ENCODE measurements at regions of chr10 and their contacts with region 1.

Region 1: DNA sequence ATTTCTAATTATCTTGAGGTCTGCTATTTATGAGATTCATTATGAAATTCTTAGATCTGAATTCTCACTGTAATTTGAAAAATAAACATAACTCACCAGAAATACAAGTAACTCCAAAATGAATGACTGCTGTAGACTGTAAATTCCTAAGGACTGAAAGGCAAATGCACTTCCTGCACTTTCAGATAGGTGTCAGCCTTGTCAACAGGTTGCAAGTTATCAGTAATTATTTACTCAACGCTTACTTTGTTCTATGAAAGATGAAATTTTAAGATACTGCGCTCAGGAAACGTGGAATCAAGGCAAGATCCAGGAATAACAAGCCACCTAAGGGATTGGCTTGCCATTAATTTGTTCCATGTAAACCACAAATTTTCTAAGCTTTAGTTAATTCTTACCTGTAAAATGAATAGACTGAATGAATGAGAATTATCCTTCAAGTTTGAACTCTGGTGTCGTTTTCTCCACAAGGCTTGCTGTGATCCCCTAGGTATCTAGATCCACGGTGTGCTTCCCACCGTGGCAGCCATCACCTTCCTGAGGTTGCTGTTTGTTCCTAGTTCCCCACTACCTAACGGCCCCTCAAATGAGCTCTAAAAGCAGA is 12.6 kb downstream of the DHX32 start:
- DNase-seq: peak in 3 of 4 experiments; percentile 12 to 51 (median 17)
- ATAC-seq: peak; percentile 75
- H3K4me3 ChIP-seq: no peak overlapping the region
- H3K27ac ChIP-seq: no peak overlapping the region
- H3K4me1 ChIP-seq: no peaks in the 10 kb centered on the region; a peak in 1 of 5 replicates
- H3K27me3 ChIP-seq: no peaks in the 10 kb centered on the region
- CTCF ChIP-seq: peak; percentile 56 to 75 (median 70); a peak in 5 of 6 replicates
- EP300 ChIP-seq: no peak
- POLR2A ChIP-seq: no peak
- RAD21 ChIP-seq: peak; percentile 63 to 70

Region 2: GRCh38 chr10:125976960-125977603 is 108.6 kb after region 1 on chr10:
- CTCF ChIA-PET with region 1: no interaction called
- POLR2A ChIA-PET with region 1: no interaction called
- in situ Hi-C with region 1: loop called (anchors 10 kb)
- intact Hi-C with region 1: loop called (anchors 5 kb)
- DNase-seq: peak in 2 of 4 experiments; percentile 7 to 30
- ATAC-seq: peak; percentile 81
- H3K4me3 ChIP-seq: no peak overlapping the region
- H3K27ac ChIP-seq: no peak overlapping the region
- H3K4me1 ChIP-seq: no peaks in the 10 kb centered on the region; a peak in 2 of 5 replicates
- H3K27me3 ChIP-seq: peaks cover 0 to 11% of the 10 kb centered on the region in 2 experiments; a peak in 2 of 5 replicates
- CTCF ChIP-seq: peak; percentile 35 to 45 (median 39); a peak in 4 of 6 replicates
- EP300 ChIP-seq: no peak
- POLR2A ChIP-seq: no peak
- RAD21 ChIP-seq: peak in 1 of 2 experiments; percentile 27; a peak in 1 of 4 replicates

Region 3: GRCh38 chr10:126133906-126134656 is 265.6 kb after region 1 on chr10:
- CTCF ChIA-PET with region 1: no interaction called
- POLR2A ChIA-PET with region 1: no interaction called
- in situ Hi-C with region 1: no loop called
- intact Hi-C with region 1: no loop called
- DNase-seq: no peak
- ATAC-seq: no peak
- H3K4me3 ChIP-seq: no peak overlapping the region
- H3K27ac ChIP-seq: no peak overlapping the region
- H3K4me1 ChIP-seq: no peaks in the 10 kb centered on the region
- H3K27me3 ChIP-seq: 0 out of 5 replicates have a peak, but pooled peaks cover 0 to 4% of the 10 kb centered on the region in 2 experiments
- CTCF ChIP-seq: no peak
- EP300 ChIP-seq: no peak
- POLR2A ChIP-seq: no peak
- RAD21 ChIP-seq: no peak

Region 4: GRCh38 chr10:126387023-126387921 is 518.8 kb after region 1 on chr10:
- CTCF ChIA-PET with region 1: no interaction called
- POLR2A ChIA-PET with region 1: no interaction called
- in situ Hi-C with region 1: no loop called
- intact Hi-C with region 1: loop called (anchors 10 kb)
- DNase-seq: peak; percentile 16 to 39 (median 24)
- ATAC-seq: peak; percentile 77
- H3K4me3 ChIP-seq: no peak overlapping the region
- H3K27ac ChIP-seq: no peak overlapping the region
- H3K4me1 ChIP-seq: no peaks in the 10 kb centered on the region
- H3K27me3 ChIP-seq: no peaks in the 10 kb centered on the region
- CTCF ChIP-seq: peak; percentile 43 to 59 (median 54)
- EP300 ChIP-seq: no peak
- POLR2A ChIP-seq: no peak
- RAD21 ChIP-seq: peak; percentile 27 to 46

Measured in K562 (cell line).